ENCODE measurements at regions of chr12 and their contacts with region 1.

Region 1: DNA sequence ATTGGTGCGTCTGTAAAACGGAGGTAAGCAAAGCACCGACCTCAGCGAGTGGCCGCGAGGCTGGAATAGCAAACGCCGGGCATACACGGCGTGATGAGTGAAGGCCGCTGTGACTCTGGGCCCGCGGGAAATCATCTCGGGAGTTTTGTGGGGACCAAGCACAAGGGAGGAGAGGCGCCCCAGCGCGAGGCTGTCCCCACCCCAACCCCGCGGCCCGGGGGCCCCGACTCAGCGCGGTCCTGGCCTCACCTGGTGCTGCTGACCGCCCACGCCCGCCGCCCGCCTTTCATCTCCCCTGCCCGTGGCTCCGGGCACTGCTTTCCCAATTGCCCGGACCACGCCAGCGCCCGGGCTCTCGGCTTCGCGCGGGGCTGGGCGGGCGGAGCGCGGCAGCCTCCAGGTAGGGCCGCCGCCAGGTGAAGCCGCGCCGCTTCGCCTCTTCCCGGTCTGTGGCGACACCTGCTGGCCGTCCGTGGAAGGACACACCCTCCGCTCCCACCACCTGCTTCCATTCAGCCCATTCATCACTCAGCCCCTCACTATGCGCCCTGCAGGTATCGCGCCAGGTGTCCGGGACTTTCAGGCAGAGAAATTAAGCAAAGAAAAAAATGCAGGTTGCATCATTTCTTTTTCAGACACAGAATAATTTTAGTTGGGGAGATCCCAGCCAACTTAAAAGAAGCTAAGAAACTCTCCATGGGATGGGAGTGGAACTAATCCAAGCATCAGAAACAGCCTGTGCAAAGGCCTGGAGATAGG is 360.4 kb downstream of the MED13L start:
- DNase-seq: peak; percentile 81
- CTCF ChIP-seq: peak; percentile 85

Region 2: GRCh38 chr12:114625294-114625851 is 1291.7 kb before region 1 on chr12:
- CTCF ChIA-PET with region 1: interaction called, 32 read pairs
- POLR2A ChIA-PET with region 1: no interaction called
- DNase-seq: peak; percentile 53
- CTCF ChIP-seq: peak; percentile 43

Region 3: GRCh38 chr12:114662512-114663177 is 1254.4 kb before region 1 on chr12:
- CTCF ChIA-PET with region 1: interaction called, 15 read pairs
- POLR2A ChIA-PET with region 1: no interaction called
- DNase-seq: no peak
- CTCF ChIP-seq: peak; percentile 82

Region 4: DNA sequence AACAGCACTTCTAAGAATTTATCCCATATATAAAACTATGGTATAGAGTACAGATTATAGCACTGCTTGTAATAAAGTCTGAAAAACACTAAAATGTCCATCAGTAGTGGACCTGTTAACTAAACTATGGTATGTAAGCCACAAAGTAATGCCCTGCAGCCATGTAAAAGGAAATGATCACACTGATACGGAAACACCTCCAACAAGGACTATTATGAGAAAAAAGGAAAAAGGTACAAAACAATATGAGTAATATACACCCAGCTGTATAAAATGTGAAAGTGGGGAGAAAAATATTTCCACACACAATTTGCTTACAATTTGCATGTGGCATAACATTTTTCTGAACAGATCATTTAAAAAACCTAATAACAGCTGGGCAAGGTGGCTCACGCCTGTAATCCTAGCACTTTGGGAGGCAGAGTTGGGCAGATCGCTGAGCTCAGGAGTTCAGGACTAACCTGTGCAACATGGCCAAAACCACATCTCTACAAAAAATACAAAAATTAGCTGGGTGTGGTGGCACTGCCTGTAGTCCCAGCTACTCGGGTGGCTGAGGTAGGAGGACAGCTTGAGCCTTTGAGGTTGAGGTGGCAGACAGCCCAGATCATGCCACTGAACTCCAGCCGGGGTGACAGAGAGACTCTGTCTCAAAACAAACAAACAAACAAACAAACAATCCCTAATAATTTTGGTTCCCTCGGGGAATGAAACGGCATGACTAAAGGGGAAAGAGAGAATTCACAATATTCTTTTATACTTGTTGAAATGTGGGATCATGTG is 109.9 kb after region 1 on chr12:
- CTCF ChIA-PET with region 1: no interaction called
- POLR2A ChIA-PET with region 1: no interaction called
- DNase-seq: no peak
- CTCF ChIP-seq: no peak

Region 5: DNA sequence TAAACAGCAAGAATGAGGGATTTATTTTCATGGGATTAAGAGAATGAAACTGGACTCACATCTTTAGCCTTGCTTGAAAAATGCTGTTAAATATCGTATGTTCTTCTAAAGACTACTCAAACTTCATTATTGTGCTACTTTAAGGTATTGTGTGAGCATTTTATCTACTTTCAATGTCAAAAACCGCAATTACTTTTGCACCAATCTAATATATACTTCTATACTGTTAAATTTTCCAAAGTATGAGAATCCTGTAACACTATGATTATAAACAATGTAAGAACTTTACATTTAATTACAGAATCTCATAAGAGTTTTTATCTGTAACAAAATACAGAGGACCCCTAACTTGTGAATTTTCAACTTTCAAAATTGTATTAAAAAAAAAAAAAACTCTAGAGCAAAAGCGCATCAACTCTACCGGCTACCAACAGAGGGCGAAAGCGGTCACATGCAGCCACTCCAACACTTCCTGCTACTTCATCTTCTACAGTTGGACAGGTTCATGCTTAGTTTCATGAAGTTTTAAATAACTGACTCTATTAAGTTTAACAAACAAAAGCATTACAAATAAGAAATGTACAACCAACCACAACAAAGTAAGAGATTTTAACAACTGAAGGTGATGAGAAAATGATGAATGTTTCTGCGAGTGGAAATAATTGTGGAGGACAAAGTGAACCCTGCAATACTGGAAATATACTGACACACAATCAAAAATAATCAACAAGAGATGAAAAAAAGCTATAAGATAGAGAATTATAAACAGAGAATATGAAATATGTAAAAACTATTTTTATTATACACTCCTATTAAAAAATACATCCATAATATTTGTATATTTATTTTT is 149.5 kb after region 1 on chr12:
- CTCF ChIA-PET with region 1: no interaction called
- POLR2A ChIA-PET with region 1: no interaction called
- DNase-seq: peak; percentile 32
- CTCF ChIP-seq: peak; percentile 66